Tibial artery (tissue), 4 donors: ENCODE measurements at regions of chr14 and their contacts with region 1.

Region 1: GRCh38 chr14:61461808-61462275 is 140.5 kb downstream of the PRKCH start:
- DNase-seq: no peak
- H3K4me3 ChIP-seq: no peak overlapping the region
- H3K27ac ChIP-seq: no peak overlapping the region
- H3K4me1 ChIP-seq: peaks cover 0 to 14% (median 0%) of the 10 kb centered on the region in 4 donors
- H3K27me3 ChIP-seq: no peaks in the 10 kb centered on the region
- CTCF ChIP-seq: peak; percentile 76 to 88

Region 2: GRCh38 chr14:61388173-61388975 is 73.5 kb before region 1 on chr14:
- intact Hi-C with region 1: no loop called
- DNase-seq: no peak
- H3K4me3 ChIP-seq: no peak overlapping the region
- H3K27ac ChIP-seq: no peak overlapping the region
- H3K4me1 ChIP-seq: no peaks in the 10 kb centered on the region
- H3K27me3 ChIP-seq: no peaks in the 10 kb centered on the region
- CTCF ChIP-seq: no peak

Region 3: DNA sequence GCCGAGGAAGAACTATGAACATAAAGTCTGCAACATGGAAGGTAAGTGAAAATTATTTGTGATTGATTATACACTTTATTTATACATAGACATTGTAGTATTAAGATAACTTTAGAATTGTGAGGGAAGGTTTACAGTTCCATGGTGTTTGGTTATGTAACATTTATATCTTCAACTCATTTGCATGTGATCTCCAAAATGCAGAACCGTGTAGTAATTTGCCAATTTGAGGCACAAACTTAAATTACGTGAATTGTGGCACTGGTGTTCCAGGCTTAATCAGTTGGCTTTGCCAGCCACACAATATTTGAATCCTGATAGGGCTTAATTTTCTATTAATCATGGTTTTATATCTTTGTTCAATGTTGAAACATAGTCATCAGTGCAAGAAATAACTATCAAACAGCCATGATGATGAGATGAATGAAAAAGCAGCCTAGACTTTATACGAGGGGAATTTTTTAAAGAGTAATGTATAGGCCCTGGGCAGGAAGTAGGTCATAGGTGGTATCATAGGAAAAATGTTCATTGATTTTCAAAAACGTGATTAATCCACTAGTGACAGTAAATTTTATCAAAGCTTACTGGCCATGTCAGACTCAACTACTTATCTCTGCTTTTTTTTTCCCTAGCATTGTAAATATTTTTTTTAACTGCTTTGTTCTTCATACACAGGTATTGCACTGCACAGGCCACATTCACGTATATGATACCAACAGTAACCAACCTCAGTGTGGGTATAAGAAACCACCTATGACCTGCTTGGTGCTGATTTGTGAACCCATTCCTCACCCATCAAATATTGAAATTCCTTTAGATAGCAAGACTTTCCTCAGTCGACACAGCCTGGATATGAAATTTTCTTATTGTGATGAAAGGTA is 265.2 kb after region 1 on chr14:
- intact Hi-C with region 1: loop called (anchors 5 kb)
- DNase-seq: no peak
- H3K4me3 ChIP-seq: no peak overlapping the region
- H3K27ac ChIP-seq: no peak overlapping the region
- H3K4me1 ChIP-seq: peaks cover 0 to 5% (median 0%) of the 10 kb centered on the region in 4 donors
- H3K27me3 ChIP-seq: no peaks in the 10 kb centered on the region
- CTCF ChIP-seq: no peak

Region 4: DNA sequence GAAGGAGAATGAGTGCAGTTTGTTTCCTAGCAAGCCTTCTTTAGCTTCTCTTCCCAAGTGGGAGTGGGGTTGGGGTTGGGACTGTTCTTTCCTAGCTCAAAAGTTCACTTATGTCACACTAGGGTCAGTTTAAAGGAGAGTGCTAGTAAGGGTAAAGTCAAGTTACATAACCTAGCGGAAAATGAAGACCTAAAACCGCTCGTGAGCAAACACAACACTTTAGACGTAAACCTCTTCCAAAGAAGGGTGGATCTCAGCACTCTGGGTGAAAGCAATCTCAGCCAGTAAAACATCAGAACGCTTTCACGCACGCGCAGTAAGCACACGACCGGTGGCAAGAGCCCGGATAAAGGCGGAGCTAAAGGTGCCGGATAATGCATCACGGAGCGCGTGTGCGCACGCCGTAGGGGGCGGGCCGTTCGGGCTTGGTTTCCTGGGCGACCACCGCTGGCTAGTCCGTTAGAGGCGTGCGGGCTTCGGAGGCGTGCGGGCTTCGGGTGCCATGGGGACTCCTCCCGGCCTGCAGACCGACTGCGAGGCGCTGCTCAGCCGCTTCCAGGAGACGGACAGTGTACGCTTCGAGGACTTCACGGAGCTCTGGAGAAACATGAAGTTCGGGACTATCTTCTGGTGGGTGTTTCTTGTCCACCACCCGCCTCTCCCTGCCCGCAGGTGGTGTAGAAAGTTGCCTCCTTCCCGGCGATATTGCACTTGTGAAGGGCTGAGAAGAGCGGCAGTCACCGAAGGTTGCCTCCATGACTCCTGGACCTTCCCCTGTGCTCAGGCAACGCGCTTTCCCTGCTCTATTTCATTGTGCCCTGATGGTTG is 300.3 kb after region 1 on chr14 and contains the start of gene SNAPC1:
- intact Hi-C with region 1: loop called (anchors 10 kb)
- DNase-seq: peak; percentile 97 to 98
- H3K4me3 ChIP-seq: peak within 1 kb of the TSS; percentile 67 to 76
- H3K27ac ChIP-seq: peak within 1 kb of the TSS; percentile 85 to 87
- H3K4me1 ChIP-seq: peaks cover 0 to 25% (median 11%) of the 10 kb centered on the region in 4 donors
- H3K27me3 ChIP-seq: no peaks in the 10 kb centered on the region
- CTCF ChIP-seq: no peak

Region 5: DNA sequence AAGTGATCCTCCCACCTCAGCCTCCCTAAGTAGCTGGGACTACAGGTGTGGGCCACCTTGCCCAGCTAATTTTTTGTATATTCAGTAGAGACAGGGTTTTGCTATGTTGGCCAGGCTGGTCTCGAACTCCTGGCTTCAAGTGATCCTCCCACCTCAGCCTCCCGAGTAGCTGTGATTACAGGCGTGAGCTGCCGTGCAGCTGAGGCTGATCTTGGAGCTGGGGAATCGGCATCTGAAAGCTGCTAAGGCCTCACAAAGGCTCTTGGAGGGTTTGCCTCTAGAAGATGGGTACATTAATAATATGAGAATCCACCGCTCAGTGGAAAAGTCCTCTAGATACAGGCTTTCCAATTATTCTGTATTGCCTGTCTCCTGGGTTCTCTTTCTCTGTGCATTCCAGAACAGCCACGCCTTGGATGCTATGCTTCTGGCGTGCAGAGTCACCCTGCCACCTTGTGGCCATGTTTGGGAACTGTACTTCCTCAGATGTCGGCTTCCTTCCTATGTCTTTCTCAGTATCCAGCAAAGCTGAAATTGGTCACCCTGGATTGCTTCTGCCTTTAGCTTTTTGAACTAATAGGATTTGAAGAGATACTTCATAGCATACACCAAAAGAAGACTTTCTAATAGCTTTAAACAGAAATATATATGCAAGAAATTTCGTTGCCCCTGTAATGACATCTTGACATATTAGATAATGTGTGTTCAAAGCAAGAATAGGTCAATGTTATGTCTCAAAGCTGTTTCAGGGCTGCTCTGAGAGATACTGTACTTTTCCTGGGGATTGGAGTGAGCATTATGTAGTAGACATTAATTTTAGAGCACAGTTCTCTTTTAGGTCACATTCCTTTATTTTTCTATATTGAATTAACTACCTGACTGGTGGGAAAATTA is 375.7 kb after region 1 on chr14:
- intact Hi-C with region 1: loop called (anchors 2 kb)
- DNase-seq: peak; percentile 76 to 82
- H3K4me3 ChIP-seq: no peak overlapping the region
- H3K27ac ChIP-seq: no peak overlapping the region
- H3K4me1 ChIP-seq: no peaks in the 10 kb centered on the region
- H3K27me3 ChIP-seq: peaks cover 0 to 3% of the 10 kb centered on the region in 2 donors
- CTCF ChIP-seq: peak; percentile 91 to 95